ENCODE measurements at regions of chr4 and their contacts with region 1.

Region 1: GRCh38 chr4:108118490-108118889 is 50.2 kb downstream of the LEF1 start:
- DNase-seq: peak in 1 of 9 donors; percentile 74
- ATAC-seq: peak; percentile 59
- H3K4me3 ChIP-seq: no peak overlapping the region
- H3K4me3 Mint-ChIP-seq: peak overlapping the region in 9 of 10 donors; percentile 57 to 89 (median 77)
- H3K27ac ChIP-seq: peak overlapping the region; percentile 80
- H3K27ac Mint-ChIP-seq: peak overlapping the region; percentile 84 to 98 (median 90)
- H3K4me1 ChIP-seq: peaks cover 58 to 97% of the 10 kb centered on the region in 2 donors
- H3K4me1 Mint-ChIP-seq: peaks cover 61 to 99% (median 97%) of the 10 kb centered on the region in 7 donors
- H3K27me3 ChIP-seq: no peaks in the 10 kb centered on the region
- H3K27me3 Mint-ChIP-seq: no peaks in the 10 kb centered on the region

Region 2: DNA sequence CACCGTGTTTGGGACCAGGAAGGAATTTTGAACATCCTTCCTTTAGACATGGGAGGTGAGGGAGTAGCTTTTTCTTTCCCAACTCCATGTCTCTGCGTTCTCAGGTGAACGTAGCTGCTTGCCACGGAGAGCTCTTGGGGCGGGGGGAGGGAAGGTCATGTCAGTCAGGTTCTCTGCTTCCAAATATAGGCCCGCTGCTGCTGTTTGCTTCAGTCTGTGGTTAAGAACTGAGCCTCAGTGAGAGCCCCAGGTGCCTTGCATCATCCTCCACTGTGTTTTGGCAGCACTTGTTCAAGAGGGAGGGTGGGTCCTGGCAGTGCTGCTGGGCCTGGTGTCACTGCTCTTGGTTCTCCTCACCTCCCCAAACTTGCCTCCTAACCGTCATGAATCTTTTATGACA is 82.3 kb before region 1 on chr4:
- CTCF ChIA-PET with region 1: interaction called, 3 read pairs
- POLR2A ChIA-PET with region 1: interaction called, 18 read pairs
- intact Hi-C with region 1: no loop called
- DNase-seq: peak in 8 of 9 donors; percentile 43 to 93 (median 88)
- ATAC-seq: peak; percentile 99
- H3K4me3 ChIP-seq: peak overlapping the region; percentile 41
- H3K4me3 Mint-ChIP-seq: peak overlapping the region; percentile 73 to 87 (median 80)
- H3K27ac ChIP-seq: peak overlapping the region; percentile 78
- H3K27ac Mint-ChIP-seq: peak overlapping the region; percentile 90 to 100 (median 96)
- H3K4me1 ChIP-seq: peaks cover 0 to 55% of the 10 kb centered on the region in 2 donors
- H3K4me1 Mint-ChIP-seq: peaks cover 19 to 81% (median 66%) of the 10 kb centered on the region in 7 donors
- H3K27me3 ChIP-seq: no peaks in the 10 kb centered on the region
- H3K27me3 Mint-ChIP-seq: no peaks in the 10 kb centered on the region

Region 3: DNA sequence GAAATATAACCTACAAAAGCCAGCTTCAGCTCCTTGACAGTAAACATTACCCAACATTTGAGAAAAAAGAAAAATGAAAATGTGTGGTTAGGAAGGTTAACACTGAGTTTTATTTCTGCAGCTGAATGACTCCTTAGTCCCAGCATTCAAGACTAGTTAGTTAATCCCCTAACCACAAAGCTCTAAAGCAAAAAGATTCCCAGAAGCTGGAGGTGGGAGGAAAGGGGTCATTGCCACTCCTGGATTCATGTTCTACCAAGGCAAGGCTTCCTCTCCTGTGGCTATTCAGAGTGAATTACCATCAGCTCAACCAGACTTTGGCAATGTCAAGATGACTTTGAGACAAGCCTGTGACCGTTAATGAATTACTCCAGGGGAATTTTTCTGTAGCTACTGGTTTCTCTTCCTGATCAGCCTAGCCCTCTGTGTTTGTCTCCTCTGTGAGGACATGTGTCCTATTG is 65.2 kb before region 1 on chr4:
- CTCF ChIA-PET with region 1: interaction called, 3 read pairs
- POLR2A ChIA-PET with region 1: interaction called, 5 read pairs
- intact Hi-C with region 1: loop called in 1 of 2 experiments (anchors 2 kb)
- DNase-seq: no peak
- ATAC-seq: no peak
- H3K4me3 ChIP-seq: no peak overlapping the region
- H3K4me3 Mint-ChIP-seq: peak overlapping the region; percentile 36 to 84 (median 54)
- H3K27ac ChIP-seq: peak overlapping the region; percentile 66
- H3K27ac Mint-ChIP-seq: peak overlapping the region; percentile 82 to 99 (median 93)
- H3K4me1 ChIP-seq: peaks cover 15 to 82% of the 10 kb centered on the region in 2 donors
- H3K4me1 Mint-ChIP-seq: peaks cover 56 to 100% (median 94%) of the 10 kb centered on the region in 7 donors
- H3K27me3 ChIP-seq: no peaks in the 10 kb centered on the region
- H3K27me3 Mint-ChIP-seq: no peaks in the 10 kb centered on the region

Region 4: DNA sequence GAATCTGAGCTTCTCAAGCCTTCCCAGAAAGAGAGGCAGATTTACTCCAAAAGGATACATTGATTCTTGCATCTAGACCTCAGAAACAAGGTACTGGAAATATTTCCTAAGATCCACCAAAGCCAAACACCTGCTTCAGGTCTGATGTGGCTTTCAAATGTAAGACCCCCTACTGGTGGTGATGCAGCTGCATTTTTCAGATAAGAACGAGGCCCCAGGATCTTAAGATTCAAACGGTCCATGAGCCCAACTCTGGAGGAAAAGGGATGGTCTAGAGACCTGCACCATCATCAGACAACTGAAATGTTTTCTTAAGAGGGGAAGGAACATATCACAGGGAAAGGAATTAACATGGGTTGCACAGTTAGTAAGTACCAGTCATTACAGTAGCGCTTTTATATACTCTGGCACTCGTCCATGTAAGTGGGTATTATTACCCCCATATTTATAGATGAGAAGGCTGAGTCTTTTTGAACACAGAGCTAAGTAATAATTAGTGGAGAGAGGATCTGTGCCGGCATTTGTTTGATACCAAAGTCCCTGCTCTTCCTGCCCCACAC is 23.5 kb before region 1 on chr4:
- CTCF ChIA-PET with region 1: interaction called, 3 read pairs
- POLR2A ChIA-PET with region 1: interaction called, 201 read pairs
- intact Hi-C with region 1: loop called in 1 of 2 experiments (anchors 2 kb)
- DNase-seq: no peak
- ATAC-seq: no peak
- H3K4me3 ChIP-seq: no peak overlapping the region
- H3K4me3 Mint-ChIP-seq: peak overlapping the region; percentile 54 to 85 (median 64)
- H3K27ac ChIP-seq: peak overlapping the region; percentile 57
- H3K27ac Mint-ChIP-seq: peak overlapping the region; percentile 35 to 92 (median 90)
- H3K4me1 ChIP-seq: peaks cover 7 to 82% of the 10 kb centered on the region in 2 donors
- H3K4me1 Mint-ChIP-seq: peaks cover 51 to 97% (median 90%) of the 10 kb centered on the region in 7 donors
- H3K27me3 ChIP-seq: no peaks in the 10 kb centered on the region
- H3K27me3 Mint-ChIP-seq: no peaks in the 10 kb centered on the region

Region 5: DNA sequence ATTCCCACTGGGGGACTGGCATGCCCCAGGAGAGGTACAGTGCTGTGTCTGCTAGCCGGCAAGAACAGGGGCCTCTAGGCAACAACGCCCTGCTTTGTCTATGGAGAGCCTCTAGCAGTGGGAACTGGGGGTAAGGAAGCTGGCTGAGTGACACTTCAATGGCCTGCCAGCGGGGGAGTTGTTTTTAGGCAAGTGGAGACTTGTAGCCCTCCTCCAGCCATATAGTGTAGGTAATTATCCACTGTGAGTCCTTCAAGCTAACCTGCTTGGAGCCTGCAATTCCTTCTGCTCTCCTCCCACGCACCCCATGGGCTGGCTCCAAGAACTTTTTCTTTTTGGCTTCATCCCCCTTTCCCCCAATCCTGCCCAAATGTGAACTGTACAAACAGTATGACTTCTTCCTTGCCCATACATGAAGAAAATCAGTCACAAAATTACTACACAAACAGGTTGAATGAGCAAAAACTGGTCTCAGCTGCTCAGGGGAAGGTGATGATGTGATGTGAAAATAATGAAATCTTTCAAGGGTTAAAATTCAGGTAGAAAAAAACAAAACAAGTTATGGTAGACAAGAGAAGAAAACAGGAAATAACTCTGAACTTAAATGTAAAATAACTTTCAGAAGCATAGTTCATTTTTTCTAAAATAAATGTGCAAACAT is 17.2 kb after region 1 on chr4:
- CTCF ChIA-PET with region 1: interaction called, 9 read pairs
- POLR2A ChIA-PET with region 1: interaction called, 400 read pairs
- intact Hi-C with region 1: loop called in 1 of 2 experiments (anchors 2 kb)
- DNase-seq: no peak
- ATAC-seq: peak; percentile 2
- H3K4me3 ChIP-seq: peak overlapping the region; percentile 27
- H3K4me3 Mint-ChIP-seq: peak overlapping the region; percentile 70 to 92 (median 82)
- H3K27ac ChIP-seq: peak overlapping the region; percentile 69
- H3K27ac Mint-ChIP-seq: peak overlapping the region; percentile 79 to 98 (median 90)
- H3K4me1 ChIP-seq: peaks cover 13 to 94% of the 10 kb centered on the region in 2 donors
- H3K4me1 Mint-ChIP-seq: peaks cover 57 to 99% (median 90%) of the 10 kb centered on the region in 7 donors
- H3K27me3 ChIP-seq: no peaks in the 10 kb centered on the region
- H3K27me3 Mint-ChIP-seq: no peaks in the 10 kb centered on the region

Region 6: DNA sequence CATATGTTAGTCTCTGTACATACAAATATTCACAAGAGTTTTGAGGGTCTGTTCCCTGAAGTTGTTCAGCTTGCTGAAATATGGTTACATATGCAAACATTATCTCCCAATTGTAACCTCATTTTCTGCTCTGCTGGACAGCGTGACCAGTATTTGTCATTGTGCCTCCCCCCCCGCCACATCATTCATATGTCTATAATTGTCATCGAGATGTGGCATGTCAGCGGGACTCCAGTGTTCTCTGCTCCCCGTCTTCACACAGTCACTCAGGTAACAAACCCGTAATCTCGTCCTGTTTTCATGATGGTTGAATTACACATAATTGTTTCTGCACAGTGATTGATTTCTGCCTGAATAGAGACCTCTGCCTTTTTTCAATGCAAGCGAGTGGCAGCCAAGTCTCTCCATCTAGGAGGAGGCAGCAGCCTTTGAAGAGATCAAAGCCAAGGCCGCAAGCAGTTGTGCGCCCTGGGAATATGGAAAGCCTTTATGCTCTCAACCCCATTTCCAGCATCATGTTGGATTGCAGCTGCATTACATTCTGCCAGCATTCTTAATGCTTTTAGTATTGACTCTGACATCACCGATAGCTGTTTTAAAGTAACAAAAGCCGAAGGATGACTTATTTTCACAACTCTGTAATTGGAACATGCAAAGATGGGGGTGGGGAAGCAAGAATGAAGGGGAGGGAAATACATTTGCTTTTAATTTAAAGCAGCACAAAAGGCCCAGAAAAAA is 22.9 kb after region 1 on chr4:
- CTCF ChIA-PET with region 1: interaction called, 4 read pairs
- POLR2A ChIA-PET with region 1: interaction called, 400 read pairs
- intact Hi-C with region 1: loop called (anchors 1 kb)
- DNase-seq: peak in 1 of 9 donors; percentile 53
- ATAC-seq: no peak
- H3K4me3 ChIP-seq: peak overlapping the region; percentile 38
- H3K4me3 Mint-ChIP-seq: peak overlapping the region; percentile 79 to 91 (median 84)
- H3K27ac ChIP-seq: peak overlapping the region; percentile 81
- H3K27ac Mint-ChIP-seq: peak overlapping the region; percentile 85 to 98 (median 95)
- H3K4me1 ChIP-seq: peaks cover 26 to 97% of the 10 kb centered on the region in 2 donors
- H3K4me1 Mint-ChIP-seq: peaks cover 61 to 99% (median 95%) of the 10 kb centered on the region in 7 donors
- H3K27me3 ChIP-seq: no peaks in the 10 kb centered on the region
- H3K27me3 Mint-ChIP-seq: no peaks in the 10 kb centered on the region

Region 7: DNA sequence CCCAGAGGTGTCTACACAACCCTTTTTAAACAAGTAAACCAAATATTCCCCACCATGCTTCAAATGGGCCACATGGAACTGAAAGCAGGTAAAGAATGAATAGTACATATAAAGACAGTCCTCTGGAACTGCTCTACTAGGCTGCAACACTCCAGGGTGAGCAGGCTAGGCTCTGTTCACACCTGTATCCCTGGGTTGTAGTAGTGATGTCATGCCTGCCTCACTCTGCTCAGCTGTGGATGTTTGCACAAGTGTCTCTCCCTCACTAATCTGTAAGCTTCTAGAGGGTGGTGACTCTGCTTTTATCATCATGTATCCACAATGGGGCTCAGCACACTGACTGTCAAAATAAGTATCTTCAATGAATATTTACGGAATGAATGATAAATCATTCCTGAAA is 29.8 kb after region 1 on chr4:
- CTCF ChIA-PET with region 1: interaction called, 4 read pairs
- POLR2A ChIA-PET with region 1: interaction called, 400 read pairs
- intact Hi-C with region 1: no loop called
- DNase-seq: peak in 5 of 9 donors; percentile 44 to 82 (median 47)
- ATAC-seq: peak; percentile 74
- H3K4me3 ChIP-seq: peak overlapping the region; percentile 32
- H3K4me3 Mint-ChIP-seq: peak overlapping the region; percentile 41 to 86 (median 80)
- H3K27ac ChIP-seq: peak overlapping the region; percentile 81
- H3K27ac Mint-ChIP-seq: peak overlapping the region; percentile 36 to 97 (median 92)
- H3K4me1 ChIP-seq: peaks cover 25 to 91% of the 10 kb centered on the region in 2 donors
- H3K4me1 Mint-ChIP-seq: peaks cover 56 to 94% (median 93%) of the 10 kb centered on the region in 7 donors
- H3K27me3 ChIP-seq: no peaks in the 10 kb centered on the region
- H3K27me3 Mint-ChIP-seq: no peaks in the 10 kb centered on the region

Region 8: DNA sequence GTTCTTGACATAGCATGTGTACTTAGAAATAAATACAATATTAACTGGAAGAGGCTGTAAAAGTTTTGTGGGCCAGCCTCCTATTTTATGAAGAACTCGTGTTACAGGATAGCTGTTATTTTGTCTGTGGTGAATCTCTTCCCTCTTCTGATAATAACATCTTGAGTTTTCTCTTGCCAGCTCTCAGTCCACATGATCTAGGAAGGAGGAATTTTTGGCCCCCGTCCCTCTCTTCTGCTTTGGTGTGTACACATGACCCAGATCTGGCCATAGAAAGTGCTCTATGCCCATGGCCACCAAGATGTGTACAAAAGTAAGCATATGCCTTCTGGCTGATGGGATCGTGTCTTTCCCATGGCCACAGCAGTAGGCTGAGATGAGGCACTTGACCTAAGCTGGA is 158.2 kb after region 1 on chr4:
- CTCF ChIA-PET with region 1: no interaction called
- POLR2A ChIA-PET with region 1: no interaction called
- intact Hi-C with region 1: no loop called
- DNase-seq: no peak
- ATAC-seq: no peak
- H3K4me3 ChIP-seq: no peak overlapping the region
- H3K4me3 Mint-ChIP-seq: no peak overlapping the region
- H3K27ac ChIP-seq: no peak overlapping the region
- H3K27ac Mint-ChIP-seq: no peak overlapping the region
- H3K4me1 ChIP-seq: no peaks in the 10 kb centered on the region
- H3K4me1 Mint-ChIP-seq: peaks cover 0 to 19% (median 14%) of the 10 kb centered on the region in 7 donors
- H3K27me3 ChIP-seq: no peaks in the 10 kb centered on the region
- H3K27me3 Mint-ChIP-seq: no peaks in the 10 kb centered on the region

Region 9: DNA sequence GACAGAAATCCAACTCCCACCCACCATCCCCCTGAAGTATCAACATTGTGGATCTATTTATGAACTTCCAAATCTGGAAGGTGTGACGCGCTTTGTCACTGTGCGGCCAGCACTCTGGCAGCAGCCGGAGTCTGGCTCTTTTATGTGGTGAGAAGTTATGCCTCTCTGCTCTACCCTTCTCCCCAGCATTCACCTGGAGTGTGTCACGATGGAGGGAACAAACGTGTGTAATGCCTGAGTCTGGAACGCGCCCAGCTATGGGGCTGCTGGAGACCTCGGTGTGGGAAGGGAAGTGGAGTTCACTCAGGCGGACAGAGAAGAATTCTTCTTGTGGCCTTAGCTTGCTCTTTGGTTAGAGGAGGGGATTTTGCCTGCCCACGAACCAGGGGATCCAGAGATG is 279.8 kb after region 1 on chr4:
- CTCF ChIA-PET with region 1: no interaction called
- POLR2A ChIA-PET with region 1: no interaction called
- intact Hi-C with region 1: no loop called
- DNase-seq: peak in 1 of 9 donors; percentile 15
- ATAC-seq: peak; percentile 26
- H3K4me3 ChIP-seq: no peak overlapping the region
- H3K4me3 Mint-ChIP-seq: no peak overlapping the region
- H3K27ac ChIP-seq: no peak overlapping the region
- H3K27ac Mint-ChIP-seq: no peak overlapping the region
- H3K4me1 ChIP-seq: peaks cover 0 to 5% of the 10 kb centered on the region in 2 donors
- H3K4me1 Mint-ChIP-seq: peaks cover 2 to 28% (median 16%) of the 10 kb centered on the region in 7 donors
- H3K27me3 ChIP-seq: no peaks in the 10 kb centered on the region
- H3K27me3 Mint-ChIP-seq: peaks cover 0 to 3% (median 0%) of the 10 kb centered on the region in 5 donors

Region 10: GRCh38 chr4:108861339-108861738 is 742.8 kb after region 1 on chr4:
- CTCF ChIA-PET with region 1: no interaction called
- POLR2A ChIA-PET with region 1: no interaction called
- intact Hi-C with region 1: no loop called
- DNase-seq: peak in 1 of 9 donors; percentile 6
- ATAC-seq: no peak
- H3K4me3 ChIP-seq: no peak overlapping the region
- H3K4me3 Mint-ChIP-seq: no peak overlapping the region
- H3K27ac ChIP-seq: no peak overlapping the region
- H3K27ac Mint-ChIP-seq: peak overlapping the region in 1 of 9 donors; percentile 56
- H3K4me1 ChIP-seq: no peaks in the 10 kb centered on the region
- H3K4me1 Mint-ChIP-seq: peaks cover 0 to 6% (median 1%) of the 10 kb centered on the region in 7 donors
- H3K27me3 ChIP-seq: no peaks in the 10 kb centered on the region
- H3K27me3 Mint-ChIP-seq: peaks cover 0 to 12% (median 6%) of the 10 kb centered on the region in 5 donors